ENCODE measurements at regions of chr6 and their contacts with region 1.

Region 1: GRCh38 chr6:134882426-134883038 is 67.4 kb downstream of the ALDH8A1 start:
- DNase-seq: peak; percentile 74
- H3K4me3 Mint-ChIP-seq: no peak overlapping the region
- H3K27ac Mint-ChIP-seq: no peak overlapping the region
- H3K4me1 Mint-ChIP-seq: no peaks in the 10 kb centered on the region
- H3K27me3 Mint-ChIP-seq: peaks cover 18% of the 10 kb centered on the region

Region 2: DNA sequence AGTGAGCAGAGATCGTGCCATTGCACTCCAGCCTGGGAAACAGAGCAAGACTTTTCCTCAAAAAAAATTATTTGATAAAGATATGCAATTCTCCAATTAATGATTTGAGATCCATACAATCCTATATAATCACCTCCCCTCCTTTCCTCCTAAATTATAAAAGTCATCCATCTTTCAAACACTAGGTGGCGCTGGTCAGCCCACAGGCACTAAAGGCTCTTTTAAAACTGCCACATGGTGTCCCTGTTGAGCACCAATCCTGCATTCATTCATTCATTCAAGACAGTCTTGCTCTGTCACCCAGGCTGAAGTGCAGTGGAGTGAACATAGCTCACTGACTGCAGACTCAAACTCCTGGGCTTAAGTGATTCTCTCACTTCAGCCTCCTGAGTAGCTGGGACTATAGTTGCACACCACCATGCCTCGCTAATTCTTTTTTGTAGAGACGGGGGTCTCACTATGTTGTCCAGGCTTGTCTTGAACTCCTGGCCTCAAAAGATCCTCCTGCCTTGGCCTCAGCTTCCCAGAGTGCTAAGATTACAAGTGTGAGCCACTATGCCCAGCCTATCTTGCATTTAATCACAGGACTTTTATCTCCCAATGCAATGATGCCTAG is 771.4 kb before region 1 on chr6:
- CTCF ChIA-PET with region 1: interaction called, 7 read pairs
- POLR2A ChIA-PET with region 1: no interaction called
- intact Hi-C with region 1: loop called (anchors 1 kb)
- DNase-seq: peak; percentile 50
- H3K4me3 Mint-ChIP-seq: no peak overlapping the region
- H3K27ac Mint-ChIP-seq: no peak overlapping the region
- H3K4me1 Mint-ChIP-seq: no peaks in the 10 kb centered on the region
- H3K27me3 Mint-ChIP-seq: peaks cover 8% of the 10 kb centered on the region

Region 3: GRCh38 chr6:134123666-134124208 is 758.8 kb before region 1 on chr6:
- CTCF ChIA-PET with region 1: interaction called, 31 read pairs
- POLR2A ChIA-PET with region 1: no interaction called
- intact Hi-C with region 1: no loop called
- DNase-seq: no peak
- H3K4me3 Mint-ChIP-seq: no peak overlapping the region
- H3K27ac Mint-ChIP-seq: no peak overlapping the region
- H3K4me1 Mint-ChIP-seq: no peaks in the 10 kb centered on the region
- H3K27me3 Mint-ChIP-seq: no peaks in the 10 kb centered on the region

Region 4: DNA sequence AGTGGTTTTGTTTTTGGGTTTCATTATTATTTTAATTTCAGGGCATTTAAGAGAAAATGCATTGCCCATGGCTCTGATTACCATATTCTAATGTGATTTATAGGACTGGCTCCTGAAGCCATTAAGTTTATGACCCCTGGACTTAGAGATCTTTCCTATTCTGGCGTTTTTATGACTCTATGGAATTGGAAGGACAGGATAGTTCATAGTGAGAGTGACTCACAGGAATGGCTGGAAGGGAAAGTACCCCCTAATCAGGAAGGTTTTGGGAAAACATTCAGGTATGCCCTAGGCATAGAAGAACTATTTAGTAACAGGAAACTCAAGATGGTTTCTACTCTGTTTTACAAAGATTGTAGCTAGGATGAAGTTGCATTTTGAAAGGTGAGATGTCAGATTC is 721.5 kb before region 1 on chr6:
- CTCF ChIA-PET with region 1: interaction called, 30 read pairs
- POLR2A ChIA-PET with region 1: no interaction called
- intact Hi-C with region 1: loop called (anchors 1 kb)
- DNase-seq: no peak
- H3K4me3 Mint-ChIP-seq: no peak overlapping the region
- H3K27ac Mint-ChIP-seq: no peak overlapping the region
- H3K4me1 Mint-ChIP-seq: peaks cover 4% of the 10 kb centered on the region
- H3K27me3 Mint-ChIP-seq: no peaks in the 10 kb centered on the region

Measured in activated CD4-positive, alpha-beta memory T cell treated with anti-CD3 and anti-CD28 coated beads for 36 hours (primary cell).